GM23248 (cell line): ENCODE measurements at regions of chr7 and their contacts with region 1.

Region 1: GRCh38 chr7:44087911-44088838 is 5.8 kb upstream of the POLM start:
- DNase-seq: peak; percentile 96
- H3K4me3 ChIP-seq: peak overlapping the region; percentile 25; the same call in 1 of the 2 replicates
- H3K27ac ChIP-seq: peak overlapping the region; percentile 99
- H3K4me1 ChIP-seq: peaks cover 53% of the 10 kb centered on the region
- H3K27me3 ChIP-seq: no peaks in the 10 kb centered on the region

Region 2: DNA sequence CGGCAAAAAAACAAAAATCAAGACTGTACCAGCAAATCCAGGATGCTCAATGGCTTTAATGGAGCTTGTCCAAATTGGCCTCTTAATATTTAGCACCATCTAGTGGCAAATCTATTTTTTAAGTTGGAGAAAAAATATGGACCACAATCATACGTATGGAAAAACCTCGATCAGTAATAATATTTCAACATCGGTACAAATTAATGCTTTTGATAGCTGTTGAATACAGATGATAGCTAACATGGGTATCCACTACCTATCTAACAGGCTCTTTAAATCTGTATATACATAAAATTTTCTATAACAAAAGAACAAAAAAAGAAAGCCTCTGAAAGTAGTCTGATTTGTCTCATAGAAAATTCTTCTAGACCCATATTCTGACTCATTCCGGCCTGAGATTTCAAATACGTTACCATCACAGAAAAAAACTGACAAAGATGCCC is 388.1 kb before region 1 on chr7:
- in situ Hi-C with region 1: no loop called
- DNase-seq: peak; percentile 88
- H3K4me3 ChIP-seq: peak overlapping the region; percentile 54
- H3K27ac ChIP-seq: peak overlapping the region; percentile 34
- H3K4me1 ChIP-seq: peaks cover 55% of the 10 kb centered on the region
- H3K27me3 ChIP-seq: no peaks in the 10 kb centered on the region

Region 3: GRCh38 chr7:43824963-43825362 is 263.2 kb before region 1 on chr7:
- in situ Hi-C with region 1: no loop called
- DNase-seq: peak; percentile 3
- H3K4me3 ChIP-seq: no peak overlapping the region
- H3K27ac ChIP-seq: no peak overlapping the region
- H3K4me1 ChIP-seq: no peaks in the 10 kb centered on the region
- H3K27me3 ChIP-seq: peaks cover 50% of the 10 kb centered on the region

Region 4: DNA sequence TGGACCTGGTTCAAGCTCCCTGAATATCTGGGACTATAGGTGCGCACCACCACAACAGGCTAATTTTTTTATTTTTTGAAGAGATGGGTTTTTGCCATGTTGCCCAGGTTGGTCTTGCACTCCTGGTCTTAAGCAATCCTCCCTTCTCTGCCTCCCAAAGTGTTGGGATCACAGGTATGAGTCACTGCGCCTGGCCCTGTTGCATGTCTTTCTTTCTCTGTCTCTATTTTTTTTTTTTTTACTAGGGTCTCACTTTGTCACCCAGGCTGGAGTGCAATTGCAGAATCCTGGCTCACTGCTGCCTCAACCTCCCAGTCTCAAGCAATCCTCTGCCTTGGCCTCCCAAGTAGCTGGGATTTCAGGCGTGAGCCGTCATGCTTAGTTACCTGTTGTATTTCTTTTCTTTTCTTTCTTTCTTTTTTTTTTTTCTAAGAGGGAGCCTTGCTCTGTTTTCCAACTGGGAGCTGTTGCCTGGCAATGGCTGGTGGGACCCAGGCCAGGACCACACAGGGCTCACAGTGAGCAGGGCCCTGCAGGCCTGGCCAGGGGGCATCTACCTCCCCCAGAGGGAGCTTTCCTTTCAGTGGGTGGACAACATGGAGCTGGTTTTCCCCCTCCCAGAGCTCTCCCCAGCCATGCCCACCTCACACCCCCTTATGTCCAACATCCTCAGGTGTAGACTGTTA is 46.9 kb after region 1 on chr7:
- in situ Hi-C with region 1: loop called (anchors 5 kb)
- DNase-seq: no peak
- H3K4me3 ChIP-seq: no peak overlapping the region
- H3K27ac ChIP-seq: no peak overlapping the region
- H3K4me1 ChIP-seq: peaks cover 10% of the 10 kb centered on the region; the same call in 1 of the 2 replicates
- H3K27me3 ChIP-seq: no peaks in the 10 kb centered on the region